Naive thymus-derived CD4-positive, alpha-beta T cell (primary cell): ENCODE measurements at regions of chr17 and their contacts with region 1.

Region 1: DNA sequence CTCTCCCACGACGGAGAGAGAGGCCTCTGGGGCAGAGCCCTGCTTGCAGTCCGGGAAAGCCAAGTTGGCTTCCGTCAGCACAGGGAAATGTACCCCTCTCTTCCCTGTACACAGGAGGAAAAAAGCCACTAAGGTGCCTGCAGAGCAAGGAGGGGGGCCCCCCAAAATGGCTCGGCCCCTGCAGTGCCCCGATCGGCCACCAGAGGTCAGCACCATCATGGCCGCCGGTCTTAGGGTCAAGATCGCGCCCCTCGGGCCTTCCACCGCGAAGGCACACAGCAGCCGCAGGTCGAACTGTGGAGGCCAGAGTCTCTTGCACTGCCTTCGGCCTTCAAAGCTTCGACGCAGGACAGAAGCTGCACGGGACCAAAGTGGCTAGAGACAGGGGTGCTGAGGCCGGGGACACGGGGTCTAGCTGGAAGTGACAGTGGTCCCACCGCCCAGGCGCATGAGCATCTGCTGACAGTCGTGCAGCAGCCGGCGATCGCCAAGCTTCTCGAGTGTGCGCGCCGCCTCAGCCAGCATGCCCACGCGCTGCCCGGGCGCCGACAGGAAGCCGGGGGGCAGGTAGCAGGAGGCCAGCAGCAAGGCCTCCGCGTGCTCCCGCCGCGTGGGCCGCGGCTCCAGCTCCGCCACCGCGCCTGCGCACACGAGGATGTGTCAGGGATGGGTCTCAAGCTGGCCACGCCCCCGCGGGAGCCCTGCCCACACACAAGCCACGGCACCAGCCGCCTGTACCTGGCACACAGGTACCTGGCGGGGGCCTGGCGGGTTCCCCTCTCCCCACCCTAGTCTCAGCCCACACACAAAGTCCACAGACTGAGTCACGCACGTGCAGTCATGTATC is 24.4 kb downstream of the SREBF1 start:
- DNase-seq: peak; percentile 33 to 79 (median 61)
- ATAC-seq: peak; percentile 73
- H3K4me3 ChIP-seq: no peak overlapping the region
- H3K4me3 Mint-ChIP-seq: no peak overlapping the region
- H3K27ac ChIP-seq: peak overlapping the region; percentile 39
- H3K27ac Mint-ChIP-seq: peak overlapping the region in 8 of 9 donors; percentile 23 to 66 (median 58)
- H3K4me1 ChIP-seq: peaks cover 6 to 9% of the 10 kb centered on the region in 2 donors
- H3K4me1 Mint-ChIP-seq: peaks cover 5 to 18% (median 9%) of the 10 kb centered on the region in 7 donors
- H3K27me3 ChIP-seq: no peaks in the 10 kb centered on the region
- H3K27me3 Mint-ChIP-seq: no peaks in the 10 kb centered on the region

Region 2: GRCh38 chr17:17729620-17730249 is 82.7 kb before region 1 on chr17:
- CTCF ChIA-PET with region 1: no interaction called
- POLR2A ChIA-PET with region 1: no interaction called
- intact Hi-C with region 1: loop called in 1 of 2 experiments (anchors 1 kb)
- DNase-seq: peak in 8 of 9 donors; percentile 39 to 74 (median 63)
- ATAC-seq: peak; percentile 87
- H3K4me3 ChIP-seq: no peak overlapping the region
- H3K4me3 Mint-ChIP-seq: peak overlapping the region in 1 of 10 donors; percentile 8
- H3K27ac ChIP-seq: no peak overlapping the region
- H3K27ac Mint-ChIP-seq: peak overlapping the region in 7 of 9 donors; percentile 35 to 92 (median 68)
- H3K4me1 ChIP-seq: peaks cover 0 to 15% of the 10 kb centered on the region in 2 donors
- H3K4me1 Mint-ChIP-seq: peaks cover 11 to 40% (median 35%) of the 10 kb centered on the region in 7 donors
- H3K27me3 ChIP-seq: no peaks in the 10 kb centered on the region
- H3K27me3 Mint-ChIP-seq: peaks cover 0 to 5% (median 0%) of the 10 kb centered on the region in 5 donors

Region 3: GRCh38 chr17:17836250-17836817 is 23.9 kb after region 1 on chr17:
- CTCF ChIA-PET with region 1: interaction called, 13 read pairs
- POLR2A ChIA-PET with region 1: interaction called, 5 read pairs
- intact Hi-C with region 1: loop called in 1 of 2 experiments (anchors 1 kb)
- DNase-seq: peak; percentile 93 to 99 (median 97)
- ATAC-seq: peak; percentile 85
- H3K4me3 ChIP-seq: peak overlapping the region; percentile 86
- H3K4me3 Mint-ChIP-seq: peak overlapping the region; percentile 85 to 95 (median 90)
- H3K27ac ChIP-seq: peak overlapping the region; percentile 99
- H3K27ac Mint-ChIP-seq: peak overlapping the region; percentile 94 to 99 (median 98)
- H3K4me1 ChIP-seq: peaks cover 18 to 60% of the 10 kb centered on the region in 2 donors
- H3K4me1 Mint-ChIP-seq: peaks cover 46 to 79% (median 75%) of the 10 kb centered on the region in 7 donors
- H3K27me3 ChIP-seq: no peaks in the 10 kb centered on the region
- H3K27me3 Mint-ChIP-seq: no peaks in the 10 kb centered on the region

Region 4: GRCh38 chr17:17859909-17860765 is 47.7 kb after region 1 on chr17:
- CTCF ChIA-PET with region 1: interaction called, 88 read pairs
- POLR2A ChIA-PET with region 1: interaction called, 7 read pairs
- intact Hi-C with region 1: loop called (anchors 1 kb)
- DNase-seq: peak; percentile 50 to 77 (median 68)
- ATAC-seq: peak; percentile 97
- H3K4me3 ChIP-seq: no peak overlapping the region
- H3K4me3 Mint-ChIP-seq: no peak overlapping the region
- H3K27ac ChIP-seq: no peak overlapping the region
- H3K27ac Mint-ChIP-seq: peak overlapping the region in 3 of 9 donors; percentile 46 to 70 (median 58)
- H3K4me1 ChIP-seq: peaks cover 0 to 28% of the 10 kb centered on the region in 2 donors
- H3K4me1 Mint-ChIP-seq: peaks cover 13 to 67% (median 52%) of the 10 kb centered on the region in 7 donors
- H3K27me3 ChIP-seq: no peaks in the 10 kb centered on the region
- H3K27me3 Mint-ChIP-seq: no peaks in the 10 kb centered on the region

Region 5: GRCh38 chr17:17935321-17936271 is 123.2 kb after region 1 on chr17:
- CTCF ChIA-PET with region 1: no interaction called
- POLR2A ChIA-PET with region 1: no interaction called
- intact Hi-C with region 1: no loop called
- DNase-seq: no peak
- ATAC-seq: peak; percentile 76
- H3K4me3 ChIP-seq: no peak overlapping the region
- H3K4me3 Mint-ChIP-seq: peak overlapping the region in 5 of 10 donors; percentile 1 to 52 (median 15)
- H3K27ac ChIP-seq: no peak overlapping the region
- H3K27ac Mint-ChIP-seq: peak overlapping the region in 3 of 9 donors; percentile 9 to 55 (median 47)
- H3K4me1 ChIP-seq: peaks cover 7 to 23% of the 10 kb centered on the region in 2 donors
- H3K4me1 Mint-ChIP-seq: peaks cover 33 to 79% (median 68%) of the 10 kb centered on the region in 7 donors
- H3K27me3 ChIP-seq: no peaks in the 10 kb centered on the region
- H3K27me3 Mint-ChIP-seq: no peaks in the 10 kb centered on the region

Region 6: GRCh38 chr17:17994271-17995069 is 182.0 kb after region 1 on chr17:
- CTCF ChIA-PET with region 1: no interaction called
- POLR2A ChIA-PET with region 1: no interaction called
- intact Hi-C with region 1: no loop called
- DNase-seq: peak in 4 of 9 donors; percentile 15 to 19 (median 16)
- ATAC-seq: peak; percentile 56
- H3K4me3 ChIP-seq: no peak overlapping the region
- H3K4me3 Mint-ChIP-seq: no peak overlapping the region
- H3K27ac ChIP-seq: no peak overlapping the region
- H3K27ac Mint-ChIP-seq: peak overlapping the region in 3 of 9 donors; percentile 34 to 44 (median 36)
- H3K4me1 ChIP-seq: no peaks in the 10 kb centered on the region
- H3K4me1 Mint-ChIP-seq: no peaks in the 10 kb centered on the region
- H3K27me3 ChIP-seq: no peaks in the 10 kb centered on the region
- H3K27me3 Mint-ChIP-seq: no peaks in the 10 kb centered on the region

Region 7: DNA sequence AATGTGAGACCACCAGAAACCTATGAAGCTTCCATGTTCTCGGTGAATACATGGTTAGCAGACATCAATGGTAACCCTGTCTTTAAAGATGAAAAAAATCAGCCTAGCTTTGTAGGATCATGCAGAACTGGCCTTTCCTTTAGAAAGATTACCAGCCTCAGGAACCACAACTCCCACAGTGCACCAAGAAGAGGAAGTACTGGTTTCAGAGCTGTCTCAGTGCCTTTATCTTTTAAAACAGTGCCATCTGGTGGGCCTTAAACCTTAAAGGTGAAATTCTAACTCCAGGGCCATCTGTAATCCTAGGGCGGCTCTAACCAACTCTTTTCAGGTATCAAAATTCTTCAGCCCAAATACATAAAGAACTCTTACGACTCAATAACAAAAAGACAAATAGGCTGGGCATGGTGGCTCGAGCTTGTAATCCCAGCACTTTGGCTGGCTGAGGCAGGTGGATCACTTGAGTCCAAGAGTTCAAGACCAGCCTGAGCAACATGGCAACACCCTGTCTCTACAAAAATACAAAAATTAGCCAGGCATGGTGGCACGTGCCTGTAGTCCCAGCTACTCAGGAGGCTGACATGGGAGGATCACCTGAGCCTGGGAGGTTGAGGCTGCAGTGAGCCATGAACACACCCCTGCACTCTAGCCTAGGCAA is 221.1 kb after region 1 on chr17:
- CTCF ChIA-PET with region 1: interaction called, 5 read pairs
- POLR2A ChIA-PET with region 1: no interaction called
- intact Hi-C with region 1: loop called in 1 of 2 experiments (anchors 1 kb)
- DNase-seq: peak in 8 of 9 donors; percentile 37 to 81 (median 70)
- ATAC-seq: peak; percentile 98
- H3K4me3 ChIP-seq: no peak overlapping the region
- H3K4me3 Mint-ChIP-seq: no peak overlapping the region
- H3K27ac ChIP-seq: no peak overlapping the region
- H3K27ac Mint-ChIP-seq: peak overlapping the region in 4 of 9 donors; percentile 3 to 79 (median 42)
- H3K4me1 ChIP-seq: peaks cover 17 to 21% of the 10 kb centered on the region in 2 donors
- H3K4me1 Mint-ChIP-seq: peaks cover 19 to 42% (median 31%) of the 10 kb centered on the region in 7 donors
- H3K27me3 ChIP-seq: no peaks in the 10 kb centered on the region
- H3K27me3 Mint-ChIP-seq: no peaks in the 10 kb centered on the region

Region 8: DNA sequence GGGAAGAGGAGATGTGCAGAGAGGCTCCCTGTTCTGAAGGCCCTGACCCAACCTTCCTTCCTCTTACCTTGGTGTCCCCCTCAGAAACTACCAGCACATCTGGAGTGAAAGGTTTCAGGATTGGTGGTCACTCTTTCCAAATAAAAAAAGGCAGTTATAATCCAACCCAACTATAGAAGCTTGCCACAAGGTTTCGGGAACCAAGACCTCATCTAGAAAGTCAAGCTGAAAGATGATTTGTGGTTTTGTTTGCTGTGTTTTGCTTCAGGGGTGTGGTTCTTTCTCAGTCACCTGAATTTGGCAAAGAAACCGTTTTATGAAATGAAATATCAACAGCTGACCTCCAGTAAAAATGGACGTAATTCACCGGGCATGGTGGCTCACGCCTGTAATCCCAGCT is 531.6 kb after region 1 on chr17:
- CTCF ChIA-PET with region 1: no interaction called
- POLR2A ChIA-PET with region 1: no interaction called
- intact Hi-C with region 1: no loop called
- DNase-seq: no peak
- ATAC-seq: no peak
- H3K4me3 ChIP-seq: no peak overlapping the region
- H3K4me3 Mint-ChIP-seq: no peak overlapping the region
- H3K27ac ChIP-seq: no peak overlapping the region
- H3K27ac Mint-ChIP-seq: no peak overlapping the region
- H3K4me1 ChIP-seq: no peaks in the 10 kb centered on the region
- H3K4me1 Mint-ChIP-seq: peaks cover 0 to 2% (median 0%) of the 10 kb centered on the region in 7 donors
- H3K27me3 ChIP-seq: no peaks in the 10 kb centered on the region
- H3K27me3 Mint-ChIP-seq: no peaks in the 10 kb centered on the region